T-cell (primary cell): ENCODE measurements at regions of chr3 and their contacts with region 1.

Region 1: DNA sequence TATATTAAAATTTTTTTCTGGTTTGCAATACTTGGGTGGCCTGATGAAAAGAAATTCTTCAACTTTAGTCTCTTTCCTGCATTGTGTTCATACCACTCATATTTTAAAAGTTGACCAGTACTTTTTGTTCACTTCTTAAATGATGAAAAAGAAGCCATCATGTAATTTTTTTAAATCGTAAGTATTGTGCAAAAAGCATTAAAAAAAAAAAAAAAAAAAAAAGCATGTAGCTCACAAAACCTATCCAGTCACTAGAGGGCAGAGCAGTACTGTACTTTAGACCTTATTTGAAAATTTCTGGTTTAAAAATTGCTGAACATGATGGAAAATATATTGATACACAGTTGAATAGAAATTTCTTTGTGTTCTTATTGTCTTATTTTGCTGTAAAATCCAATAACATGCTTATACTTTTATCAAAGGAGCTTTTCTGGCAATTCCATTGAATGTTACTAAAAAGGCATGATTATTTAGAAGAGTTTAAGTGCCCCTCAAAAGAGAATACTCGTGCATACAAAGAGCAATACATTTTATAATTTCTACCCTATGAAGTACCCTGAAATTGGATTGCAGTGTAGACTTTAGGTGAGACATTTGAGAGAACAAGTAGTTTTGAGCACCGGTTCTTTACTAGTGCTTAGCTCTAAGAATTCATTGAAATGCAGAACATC is 137.7 kb downstream of the BBX start:
- DNase-seq: peak in 2 of 35 experiments; percentile 13 to 58
- ATAC-seq: no peak
- H3K4me3 ChIP-seq: no peak overlapping the region
- H3K4me3 Mint-ChIP-seq: no peak overlapping the region
- H3K27ac ChIP-seq: no peak overlapping the region
- H3K27ac Mint-ChIP-seq: no peak overlapping the region
- H3K4me1 ChIP-seq: peaks cover 0 to 10% of the 10 kb centered on the region in 2 experiments
- H3K4me1 Mint-ChIP-seq: peaks cover 26 to 30% (median 28%) of the 10 kb centered on the region in 3 donors
- H3K27me3 ChIP-seq: no peaks in the 10 kb centered on the region
- H3K27me3 Mint-ChIP-seq: no peaks in the 10 kb centered on the region

Region 2: DNA sequence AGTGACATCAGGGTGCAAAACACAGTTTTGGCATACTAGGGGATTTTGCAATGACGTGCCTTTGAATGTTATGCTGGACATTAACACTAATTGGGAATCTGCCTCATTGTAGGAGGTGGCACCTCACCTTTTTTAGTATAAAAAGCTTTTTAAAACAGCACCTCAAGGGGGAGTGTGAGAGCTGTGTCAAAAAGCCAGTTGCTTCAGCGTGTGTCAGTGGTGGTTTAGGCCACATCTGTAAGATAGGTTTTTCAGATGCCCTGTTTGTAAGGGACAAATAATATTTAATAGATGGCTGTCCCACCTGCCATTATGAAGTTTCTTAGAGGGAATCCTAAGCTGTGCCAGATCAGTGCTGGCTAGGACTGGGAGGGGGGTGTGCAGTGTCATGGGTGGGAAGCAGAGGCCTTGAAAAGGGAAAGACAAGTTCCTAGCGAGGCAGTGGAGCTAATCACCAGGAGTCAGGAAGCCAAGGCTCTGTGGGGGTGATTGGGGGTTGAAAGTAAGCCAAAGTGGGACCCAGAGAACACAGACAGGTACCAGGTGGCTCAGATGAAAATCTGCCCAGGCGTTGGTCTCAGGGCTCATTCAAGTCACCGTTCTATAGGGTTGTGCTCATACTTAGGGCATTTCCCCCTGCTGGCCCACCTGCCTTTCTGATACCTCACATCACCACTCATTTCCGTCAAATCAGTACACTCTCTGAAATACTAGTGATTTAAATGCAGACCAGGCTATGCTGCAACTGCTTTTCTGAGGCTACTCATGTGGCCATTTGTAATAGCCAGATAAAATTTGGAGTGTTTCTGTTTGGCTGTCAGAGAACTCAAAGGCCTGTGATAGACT is 17.2 kb before region 1 on chr3:
- CTCF ChIA-PET with region 1: interaction called, 6 to 10 read pairs
- POLR2A ChIA-PET with region 1: no interaction called
- DNase-seq: peak in 1 of 35 experiments; percentile 9
- ATAC-seq: no peak
- H3K4me3 ChIP-seq: no peak overlapping the region
- H3K4me3 Mint-ChIP-seq: no peak overlapping the region
- H3K27ac ChIP-seq: no peak overlapping the region
- H3K27ac Mint-ChIP-seq: no peak overlapping the region
- H3K4me1 ChIP-seq: peaks cover 0 to 7% of the 10 kb centered on the region in 2 experiments
- H3K4me1 Mint-ChIP-seq: peaks cover 20 to 35% (median 27%) of the 10 kb centered on the region in 3 donors
- H3K27me3 ChIP-seq: no peaks in the 10 kb centered on the region
- H3K27me3 Mint-ChIP-seq: no peaks in the 10 kb centered on the region

Region 3: GRCh38 chr3:107676469-107677309 is 16.2 kb after region 1 on chr3:
- CTCF ChIA-PET with region 1: interaction called, 19 to 40 read pairs
- POLR2A ChIA-PET with region 1: interaction called, 3 read pairs
- DNase-seq: peak in 1 of 35 experiments; percentile 42
- ATAC-seq: peak in 2 of 4 experiments; percentile 50 to 54
- H3K4me3 ChIP-seq: no peak overlapping the region
- H3K4me3 Mint-ChIP-seq: no peak overlapping the region
- H3K27ac ChIP-seq: no peak overlapping the region
- H3K27ac Mint-ChIP-seq: peak overlapping the region in 1 of 2 donors; percentile 3
- H3K4me1 ChIP-seq: peaks cover 0 to 6% of the 10 kb centered on the region in 2 experiments
- H3K4me1 Mint-ChIP-seq: peaks cover 41 to 42% (median 41%) of the 10 kb centered on the region in 3 donors
- H3K27me3 ChIP-seq: no peaks in the 10 kb centered on the region
- H3K27me3 Mint-ChIP-seq: no peaks in the 10 kb centered on the region

Region 4: DNA sequence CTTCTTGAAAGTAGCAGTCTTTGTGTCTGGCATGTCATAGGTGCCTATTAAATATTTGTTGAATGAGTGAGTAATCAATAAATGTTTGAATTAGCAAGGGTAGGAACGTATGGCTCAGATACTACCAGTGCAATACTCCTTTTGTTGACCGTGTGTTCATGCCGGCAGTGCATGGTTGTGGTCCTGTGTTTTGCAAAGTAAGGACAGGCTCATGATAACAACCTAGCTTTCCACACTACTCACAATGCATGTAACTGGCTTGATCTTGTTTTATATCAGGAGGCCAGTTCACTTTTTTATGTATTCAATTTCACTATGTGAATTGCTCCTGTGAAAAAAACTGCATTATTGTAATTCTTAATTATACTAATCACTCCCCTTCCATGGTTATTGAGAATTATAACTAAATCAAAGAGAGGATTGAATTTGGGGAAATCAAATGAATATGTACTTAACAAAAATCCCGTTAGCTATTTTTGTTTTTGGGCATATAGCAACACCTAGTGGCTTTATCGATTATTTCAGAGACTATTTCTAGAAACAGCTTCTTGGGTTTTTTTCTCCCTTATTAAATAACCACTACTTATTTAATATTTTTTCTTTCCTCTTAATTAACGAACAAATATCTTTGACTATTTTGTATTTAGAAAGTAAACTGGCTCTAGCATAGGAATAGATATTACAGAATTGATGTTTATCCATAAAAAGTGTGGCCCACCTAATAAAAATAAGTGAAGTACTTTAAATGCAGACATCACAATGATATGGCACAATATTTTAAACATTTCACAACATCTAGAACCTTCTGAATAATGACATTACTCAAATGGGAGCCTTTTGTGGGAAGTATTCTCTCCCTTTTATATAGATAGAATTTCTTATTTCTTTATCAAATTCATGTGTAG is 80.8 kb after region 1 on chr3:
- CTCF ChIA-PET with region 1: interaction called, 20 to 23 read pairs
- POLR2A ChIA-PET with region 1: interaction called in 1 of 2 experiments, 8 read pairs
- DNase-seq: peak in 1 of 35 experiments; percentile 40
- ATAC-seq: no peak
- H3K4me3 ChIP-seq: no peak overlapping the region
- H3K4me3 Mint-ChIP-seq: no peak overlapping the region
- H3K27ac ChIP-seq: no peak overlapping the region
- H3K27ac Mint-ChIP-seq: no peak overlapping the region
- H3K4me1 ChIP-seq: no peaks in the 10 kb centered on the region
- H3K4me1 Mint-ChIP-seq: peaks cover 3 to 6% (median 3%) of the 10 kb centered on the region in 3 donors
- H3K27me3 ChIP-seq: no peaks in the 10 kb centered on the region
- H3K27me3 Mint-ChIP-seq: no peaks in the 10 kb centered on the region

Region 5: GRCh38 chr3:107927361-107928083 is 267.1 kb after region 1 on chr3:
- CTCF ChIA-PET with region 1: interaction called in 1 of 2 experiments, 18 read pairs
- POLR2A ChIA-PET with region 1: no interaction called
- DNase-seq: peak; percentile 21 to 76 (median 53)
- ATAC-seq: peak; percentile 90 to 95 (median 92)
- H3K4me3 ChIP-seq: peak overlapping the region; percentile 64 to 90
- H3K4me3 Mint-ChIP-seq: peak overlapping the region; percentile 83 to 86 (median 83)
- H3K27ac ChIP-seq: no peak overlapping the region
- H3K27ac Mint-ChIP-seq: peak overlapping the region in 1 of 2 donors; percentile 12
- H3K4me1 ChIP-seq: peaks cover 2 to 13% of the 10 kb centered on the region in 2 experiments
- H3K4me1 Mint-ChIP-seq: peaks cover 14% of the 10 kb centered on the region in 3 donors
- H3K27me3 ChIP-seq: peaks cover 0 to 20% of the 10 kb centered on the region in 2 experiments
- H3K27me3 Mint-ChIP-seq: peaks cover 5 to 10% of the 10 kb centered on the region in 2 donors

Region 6: GRCh38 chr3:108565506-108565905 is 905.1 kb after region 1 on chr3:
- CTCF ChIA-PET with region 1: no interaction called
- POLR2A ChIA-PET with region 1: interaction called in 1 of 2 experiments, 10 read pairs
- DNase-seq: no peak
- ATAC-seq: no peak
- H3K4me3 ChIP-seq: no peak overlapping the region
- H3K4me3 Mint-ChIP-seq: no peak overlapping the region
- H3K27ac ChIP-seq: no peak overlapping the region
- H3K27ac Mint-ChIP-seq: no peak overlapping the region
- H3K4me1 ChIP-seq: no peaks in the 10 kb centered on the region
- H3K4me1 Mint-ChIP-seq: peaks cover 0 to 2% (median 0%) of the 10 kb centered on the region in 3 donors
- H3K27me3 ChIP-seq: no peaks in the 10 kb centered on the region
- H3K27me3 Mint-ChIP-seq: no peaks in the 10 kb centered on the region